A549 (cell line): ENCODE measurements at regions of chr12 and their contacts with region 1.

Region 1: GRCh38 chr12:3998968-3999826 is 126.0 kb upstream of the PARP11 start:
- DNase-seq: peak in 1 of 2 experiments; percentile 40
- ATAC-seq: no peak
- H3K4me3 ChIP-seq: no peak overlapping the region
- H3K27ac ChIP-seq: no peak overlapping the region
- H3K4me1 ChIP-seq: no peaks in the 10 kb centered on the region
- CTCF ChIP-seq: no peak
- EP300 ChIP-seq: no peak
- POLR2A ChIP-seq: no peak
- RAD21 ChIP-seq: no peak

Region 2: GRCh38 chr12:4011597-4011996 is 12.4 kb after region 1 on chr12:
- CTCF ChIA-PET with region 1: interaction called, 12 read pairs
- POLR2A ChIA-PET with region 1: no interaction called
- DNase-seq: peak in 1 of 2 experiments; percentile 49
- ATAC-seq: peak in 1 of 2 experiments; percentile 35; a peak in 4 of 6 replicates
- H3K4me3 ChIP-seq: no peak overlapping the region
- H3K27ac ChIP-seq: no peak overlapping the region
- H3K4me1 ChIP-seq: no peaks in the 10 kb centered on the region
- CTCF ChIP-seq: no peak
- EP300 ChIP-seq: no peak
- POLR2A ChIP-seq: no peak
- RAD21 ChIP-seq: no peak